Activated CD4-positive, alpha-beta T cell treated with anti-CD3 and anti-CD28 coated beads for 36 hours (primary cell): ENCODE measurements at regions of chr7 and their contacts with region 1.

Region 1: DNA sequence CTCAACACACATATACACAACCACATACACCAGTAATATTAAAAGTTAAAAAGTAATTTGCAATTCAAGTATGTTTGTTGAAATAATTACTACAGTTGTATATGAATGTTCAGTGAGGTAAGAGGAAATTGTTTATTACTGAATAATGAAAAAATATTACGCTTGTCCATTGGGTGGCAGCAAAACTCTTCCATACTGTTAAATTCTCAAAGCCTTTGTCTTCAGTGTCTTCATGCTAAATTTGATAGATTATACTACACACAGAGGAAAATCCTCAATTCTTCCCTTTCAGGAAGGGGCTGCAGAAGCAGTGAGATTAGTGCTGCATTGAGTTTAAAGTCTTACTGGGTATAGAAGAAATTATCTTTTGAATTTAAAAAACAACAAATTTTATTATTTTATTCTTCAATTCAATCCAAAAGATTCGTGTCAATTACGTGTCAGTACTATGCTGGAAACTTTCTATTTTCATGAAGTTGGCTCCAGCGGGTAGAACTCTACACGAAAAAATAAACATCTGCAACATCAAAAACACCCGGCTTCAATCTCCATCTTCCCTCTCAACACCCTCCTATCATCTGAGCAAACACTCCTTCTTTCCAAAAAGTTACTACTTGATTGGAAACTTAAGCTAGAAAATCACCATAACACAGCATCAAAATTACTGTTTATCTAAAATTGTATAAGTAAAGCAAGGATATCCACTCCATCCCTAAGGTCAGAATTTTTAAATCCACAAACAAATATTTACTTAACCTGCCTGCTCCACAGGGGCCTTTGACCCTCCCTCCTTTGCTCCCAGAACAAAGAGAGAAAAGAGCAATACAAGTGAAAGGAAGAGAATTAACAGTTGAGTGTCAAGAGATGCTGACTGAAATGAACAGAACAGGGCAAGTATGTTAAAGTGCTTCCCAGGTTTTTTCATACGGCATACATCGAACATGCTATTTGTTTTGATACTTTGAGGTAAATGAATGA is 37.0 kb upstream of the TES start:
- DNase-seq: peak; percentile 15
- ATAC-seq: no peak
- H3K4me3 Mint-ChIP-seq: no peak overlapping the region
- H3K27ac Mint-ChIP-seq: no peak overlapping the region
- H3K4me1 Mint-ChIP-seq: no peaks in the 10 kb centered on the region
- H3K27me3 Mint-ChIP-seq: peaks cover 6% of the 10 kb centered on the region

Region 2: DNA sequence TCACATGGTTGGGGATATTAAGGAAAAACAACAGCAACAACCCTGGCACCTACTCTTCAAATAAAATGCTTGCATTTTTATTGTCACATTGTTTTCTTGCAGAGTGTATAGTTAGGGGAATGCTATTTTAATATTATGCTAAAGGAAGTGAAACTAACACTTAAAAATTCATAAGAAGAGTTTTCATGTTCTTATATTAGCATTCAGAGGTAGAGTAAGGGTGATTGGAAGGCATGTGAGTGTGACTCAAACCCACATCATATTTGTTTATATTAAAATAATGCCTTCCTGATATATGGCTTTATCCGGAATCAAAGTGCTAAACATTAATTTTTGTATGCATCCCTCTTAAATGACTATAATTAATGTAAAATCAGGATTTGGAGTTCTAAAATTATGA is 22.8 kb before region 1 on chr7:
- CTCF ChIA-PET with region 1: no interaction called
- POLR2A ChIA-PET with region 1: no interaction called
- intact Hi-C with region 1: no loop called
- DNase-seq: no peak
- ATAC-seq: no peak
- H3K4me3 Mint-ChIP-seq: no peak overlapping the region
- H3K27ac Mint-ChIP-seq: no peak overlapping the region
- H3K4me1 Mint-ChIP-seq: no peaks in the 10 kb centered on the region
- H3K27me3 Mint-ChIP-seq: peaks cover 4% of the 10 kb centered on the region

Region 3: DNA sequence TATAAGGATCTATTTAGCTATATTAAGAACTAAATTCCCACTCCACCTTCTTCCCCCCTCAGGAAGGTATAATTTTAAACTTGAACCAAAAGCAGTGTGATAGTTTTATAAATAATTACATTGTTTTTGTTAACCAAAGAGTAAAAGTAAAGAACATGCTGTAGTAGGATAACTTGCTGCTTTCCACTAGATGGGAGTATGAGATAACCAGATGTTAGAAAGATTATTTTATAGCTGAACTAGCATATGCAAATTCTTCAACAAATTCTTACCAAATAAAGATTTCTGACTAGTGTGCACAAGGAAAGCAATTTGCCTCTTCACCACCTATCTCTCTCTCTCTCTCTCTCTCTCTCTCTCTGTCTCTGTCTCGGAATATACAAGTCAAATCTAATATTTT is 68.8 kb after region 1 on chr7:
- CTCF ChIA-PET with region 1: interaction called, 293 read pairs
- POLR2A ChIA-PET with region 1: no interaction called
- intact Hi-C with region 1: no loop called
- DNase-seq: no peak
- ATAC-seq: no peak
- H3K4me3 Mint-ChIP-seq: no peak overlapping the region
- H3K27ac Mint-ChIP-seq: no peak overlapping the region
- H3K4me1 Mint-ChIP-seq: peaks cover 53% of the 10 kb centered on the region
- H3K27me3 Mint-ChIP-seq: no peaks in the 10 kb centered on the region

Region 4: GRCh38 chr7:116525913-116526861 is 352.8 kb after region 1 on chr7:
- CTCF ChIA-PET with region 1: no interaction called
- POLR2A ChIA-PET with region 1: no interaction called
- intact Hi-C with region 1: loop called (anchors 1 to 2 kb)
- DNase-seq: peak; percentile 80
- ATAC-seq: peak; percentile 96
- H3K4me3 Mint-ChIP-seq: peak overlapping the region; percentile 71
- H3K27ac Mint-ChIP-seq: no peak overlapping the region
- H3K4me1 Mint-ChIP-seq: peaks cover 20% of the 10 kb centered on the region
- H3K27me3 Mint-ChIP-seq: peaks cover 59% of the 10 kb centered on the region

Region 5: DNA sequence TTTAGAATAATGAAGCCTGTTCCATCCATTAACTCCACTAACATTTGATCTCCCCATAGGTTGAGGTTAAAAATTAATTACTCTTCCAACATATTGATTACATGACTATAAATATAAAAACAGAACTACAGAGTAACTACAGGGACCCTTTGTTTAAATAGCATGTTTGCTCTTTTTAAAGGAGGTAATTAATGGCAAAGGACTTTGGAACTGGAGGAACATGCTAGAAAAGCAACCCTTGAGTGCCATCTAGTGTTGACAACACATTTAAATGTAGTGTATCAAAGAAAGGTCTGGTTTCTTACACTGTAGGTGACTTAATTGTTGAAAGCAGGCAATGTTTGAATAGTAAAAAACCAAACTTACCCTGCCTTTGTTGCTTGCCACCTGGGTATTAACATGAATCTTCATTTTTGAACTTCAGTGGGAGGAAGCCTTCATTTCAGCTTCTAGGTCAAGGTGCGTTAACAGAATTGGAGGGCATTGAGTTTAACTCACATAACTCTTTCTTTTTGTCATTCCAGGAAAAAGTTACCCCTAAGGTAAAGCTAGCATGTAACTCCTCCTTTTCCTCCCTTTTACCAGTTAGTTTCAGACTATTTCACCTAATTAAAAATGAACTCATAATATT is 636.4 kb after region 1 on chr7:
- CTCF ChIA-PET with region 1: no interaction called
- POLR2A ChIA-PET with region 1: no interaction called
- intact Hi-C with region 1: loop called (anchors 2 kb)
- DNase-seq: no peak
- ATAC-seq: peak; percentile 69
- H3K4me3 Mint-ChIP-seq: no peak overlapping the region
- H3K27ac Mint-ChIP-seq: no peak overlapping the region
- H3K4me1 Mint-ChIP-seq: no peaks in the 10 kb centered on the region
- H3K27me3 Mint-ChIP-seq: peaks cover 3% of the 10 kb centered on the region

Region 6: GRCh38 chr7:117127585-117128168 is 954.3 kb after region 1 on chr7:
- CTCF ChIA-PET with region 1: no interaction called
- POLR2A ChIA-PET with region 1: no interaction called
- intact Hi-C with region 1: loop called in 1 of 2 experiments (anchors 10 kb)
- DNase-seq: peak; percentile 72
- ATAC-seq: peak; percentile 40
- H3K4me3 Mint-ChIP-seq: no peak overlapping the region
- H3K27ac Mint-ChIP-seq: no peak overlapping the region
- H3K4me1 Mint-ChIP-seq: peaks cover 15% of the 10 kb centered on the region
- H3K27me3 Mint-ChIP-seq: no peaks in the 10 kb centered on the region